CD4-positive, alpha-beta T cell (primary cell): ENCODE measurements at regions of chr18 and their contacts with region 1.

Region 1: DNA sequence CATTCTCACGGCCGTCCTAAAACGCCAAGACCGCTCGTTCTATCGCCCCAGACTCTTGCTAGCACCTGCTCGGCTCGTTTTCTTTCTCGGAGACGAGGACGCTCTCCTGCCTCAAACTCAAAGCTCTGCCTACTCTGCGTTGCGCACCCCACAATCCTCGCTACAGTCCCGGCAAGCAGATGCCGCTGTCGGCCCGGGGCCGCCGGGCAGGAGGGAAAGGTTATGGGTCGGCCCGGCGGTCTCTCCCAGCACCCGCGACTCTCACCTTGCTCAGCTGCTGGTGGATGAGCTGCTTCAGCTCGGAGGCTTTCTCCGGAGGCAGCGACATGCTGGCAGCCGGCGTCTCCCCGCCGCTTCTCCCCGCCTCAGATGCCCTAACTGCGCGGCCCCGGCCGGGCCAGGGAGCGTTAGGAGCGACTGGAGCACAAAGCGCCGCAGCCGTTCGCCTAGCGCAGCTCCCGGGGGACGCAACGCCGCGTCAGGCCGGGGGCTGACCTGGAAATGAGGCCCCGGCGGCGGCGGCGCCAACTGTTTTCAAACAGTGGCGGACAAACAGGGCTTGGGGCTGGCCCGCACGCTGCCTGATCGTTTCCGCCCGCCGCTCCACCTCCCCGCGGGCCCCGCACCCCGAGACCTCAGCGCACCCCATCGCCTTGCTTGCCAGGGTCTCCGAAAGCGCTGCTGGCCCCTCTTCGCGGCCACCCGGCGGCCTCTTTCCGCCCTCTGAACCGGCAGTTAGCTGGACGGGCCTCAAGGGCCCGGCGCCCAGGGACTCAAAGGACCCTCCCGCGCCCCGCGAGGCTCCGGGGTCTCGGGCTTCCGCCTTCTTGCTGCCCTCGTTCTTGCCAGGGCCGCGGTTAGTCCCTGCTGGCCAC is at the starts of genes CEP76 and PSMG2:
- DNase-seq: peak; percentile 69 to 91 (median 80)
- ATAC-seq: peak; percentile 73
- H3K4me3 ChIP-seq: peak within 1 kb of the TSS; percentile 96
- H3K4me3 Mint-ChIP-seq: peak within 1 kb of the TSS; percentile 94
- H3K27ac ChIP-seq: peak within 1 kb of the TSS; percentile 88 to 95
- H3K27ac Mint-ChIP-seq: peak within 1 kb of the TSS; percentile 85
- H3K4me1 ChIP-seq: peaks cover 25% of the 10 kb centered on the region
- H3K4me1 Mint-ChIP-seq: peaks cover 53% of the 10 kb centered on the region
- H3K27me3 ChIP-seq: no peaks in the 10 kb centered on the region
- H3K27me3 Mint-ChIP-seq: no peaks in the 10 kb centered on the region
- CTCF ChIP-seq: no peak
- total RNA-seq, gene CEP76: 8.0 to 8.7 TPM
- total RNA-seq, gene PSMG2: 58.4 to 61.7 TPM

Region 2: DNA sequence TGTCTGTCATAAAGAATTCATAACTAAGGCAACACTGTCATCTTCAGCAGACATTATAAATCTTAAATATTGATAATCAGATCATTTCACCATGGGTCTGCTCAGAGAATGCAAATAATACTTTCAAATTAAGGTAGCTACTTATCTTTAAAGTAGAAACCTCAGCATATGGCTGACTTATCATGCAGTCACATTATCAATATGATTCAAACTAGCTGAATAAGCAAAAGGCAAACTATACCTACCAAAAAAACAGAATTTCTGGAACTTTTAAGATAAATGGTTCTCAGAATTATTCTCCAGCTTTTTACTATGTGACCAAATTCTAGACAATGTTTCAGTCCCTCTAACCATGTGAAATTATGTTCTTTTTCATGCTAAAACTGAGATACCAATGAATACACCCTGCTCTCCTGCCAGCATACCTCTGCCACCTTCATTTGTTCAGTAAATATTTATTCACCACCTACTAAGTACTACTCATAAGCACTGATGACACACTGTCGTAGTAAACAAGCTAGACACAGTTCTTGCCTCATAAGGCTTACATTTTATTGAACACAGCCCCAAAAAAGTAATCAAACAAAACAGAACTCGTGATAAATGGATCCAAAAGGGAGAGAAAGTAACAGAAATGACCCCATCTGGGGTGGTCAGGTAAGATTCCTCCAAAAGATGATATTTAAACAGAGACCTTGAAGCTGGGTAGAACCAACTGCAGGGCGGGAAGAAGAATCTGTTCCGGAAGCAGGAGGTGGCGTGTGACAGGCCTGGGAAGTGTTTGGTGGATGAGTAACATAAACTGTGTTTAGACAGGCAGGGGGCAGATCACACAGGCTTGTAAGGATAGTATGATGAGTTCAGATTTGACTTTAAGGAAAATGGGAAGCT is 62.2 kb before region 1 on chr18:
- CTCF ChIA-PET with region 1: no interaction called
- POLR2A ChIA-PET with region 1: no interaction called
- intact Hi-C with region 1: no loop called
- DNase-seq: no peak
- ATAC-seq: no peak
- H3K4me3 ChIP-seq: no peak overlapping the region
- H3K4me3 Mint-ChIP-seq: no peak overlapping the region
- H3K27ac ChIP-seq: no peak overlapping the region
- H3K27ac Mint-ChIP-seq: no peak overlapping the region
- H3K4me1 ChIP-seq: no peaks in the 10 kb centered on the region
- H3K4me1 Mint-ChIP-seq: no peaks in the 10 kb centered on the region
- H3K27me3 ChIP-seq: no peaks in the 10 kb centered on the region
- H3K27me3 Mint-ChIP-seq: peaks cover 12% of the 10 kb centered on the region
- CTCF ChIP-seq: no peak

Region 3: DNA sequence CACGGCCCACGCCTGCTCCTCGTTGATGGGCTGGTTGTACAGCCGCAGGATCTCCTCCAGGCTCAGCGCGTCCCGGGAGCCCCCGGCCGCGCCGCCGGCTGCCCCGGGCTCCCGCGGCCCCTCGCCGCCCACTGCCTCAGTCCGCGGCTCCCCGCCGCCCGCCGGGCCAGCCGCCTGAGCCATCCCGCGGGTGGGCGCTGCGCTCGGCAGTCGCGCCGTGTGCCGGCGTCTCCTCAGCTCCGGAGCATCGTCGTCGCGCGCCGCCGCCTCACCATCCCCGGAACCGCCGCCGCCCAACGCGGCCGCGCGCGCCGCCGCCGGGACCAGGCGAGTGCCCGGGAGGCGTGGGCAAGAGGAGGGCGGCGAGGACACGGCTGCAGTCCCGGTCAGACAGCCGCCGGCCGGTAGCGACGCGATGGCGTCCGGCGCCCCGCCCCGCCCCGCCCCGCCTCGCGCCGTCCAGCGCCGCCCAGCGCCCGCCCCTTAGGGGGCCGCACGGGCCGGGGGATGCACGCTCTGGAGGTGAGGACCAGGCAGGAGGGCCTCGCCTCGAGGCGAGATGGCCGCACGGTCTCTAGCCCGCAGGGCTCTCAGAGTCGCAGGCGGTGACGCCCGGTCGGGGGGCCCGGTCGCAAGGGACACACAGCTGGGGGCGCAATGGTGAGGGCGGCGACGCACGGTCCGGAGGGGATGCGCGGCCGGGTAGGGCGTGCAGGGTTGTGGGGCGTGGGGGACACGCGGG is 44.6 kb before region 1 on chr18 and contains the start of gene SPIRE1:
- CTCF ChIA-PET with region 1: no interaction called
- POLR2A ChIA-PET with region 1: interaction called, 3 read pairs
- intact Hi-C with region 1: loop called in 1 of 2 experiments (anchors 2 kb)
- DNase-seq: peak in 11 of 14 experiments; percentile 6 to 75 (median 35)
- ATAC-seq: peak; percentile 61
- H3K4me3 ChIP-seq: peak within 1 kb of the TSS; percentile 45
- H3K4me3 Mint-ChIP-seq: peak within 1 kb of the TSS; percentile 93
- H3K27ac ChIP-seq: no peak within 1 kb of the TSS
- H3K27ac Mint-ChIP-seq: peak within 1 kb of the TSS; percentile 34
- H3K4me1 ChIP-seq: peaks cover 10% of the 10 kb centered on the region
- H3K4me1 Mint-ChIP-seq: peaks cover 12% of the 10 kb centered on the region
- H3K27me3 ChIP-seq: no peaks in the 10 kb centered on the region
- H3K27me3 Mint-ChIP-seq: peaks cover 18% of the 10 kb centered on the region
- CTCF ChIP-seq: no peak
- total RNA-seq, gene SPIRE1: 0.99 to 1.4 TPM

Region 4: DNA sequence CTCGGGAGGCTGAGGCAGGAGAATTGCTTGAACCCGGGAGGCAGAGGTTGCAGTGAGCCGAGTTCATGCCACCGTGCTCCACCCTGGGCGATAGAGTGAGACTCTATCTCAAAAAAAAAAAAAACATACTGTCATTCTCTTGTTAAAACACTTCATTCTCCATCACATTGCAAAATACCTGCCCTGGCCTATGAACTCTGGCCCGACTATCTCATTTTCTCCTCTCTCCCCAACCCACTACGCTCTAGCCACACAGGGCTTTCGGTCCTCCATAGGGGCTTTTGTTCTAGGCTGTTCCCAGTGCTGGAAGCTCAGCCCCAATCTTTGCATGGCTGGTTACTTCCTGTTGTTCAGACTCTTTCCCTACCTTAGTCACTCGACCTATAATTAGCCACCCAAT is 10.3 kb before region 1 on chr18:
- CTCF ChIA-PET with region 1: no interaction called
- POLR2A ChIA-PET with region 1: interaction called, 10 read pairs
- intact Hi-C with region 1: no loop called
- DNase-seq: no peak
- ATAC-seq: no peak
- H3K4me3 ChIP-seq: no peak overlapping the region
- H3K4me3 Mint-ChIP-seq: no peak overlapping the region
- H3K27ac ChIP-seq: no peak overlapping the region
- H3K27ac Mint-ChIP-seq: no peak overlapping the region
- H3K4me1 ChIP-seq: no peaks in the 10 kb centered on the region
- H3K4me1 Mint-ChIP-seq: no peaks in the 10 kb centered on the region
- H3K27me3 ChIP-seq: no peaks in the 10 kb centered on the region
- H3K27me3 Mint-ChIP-seq: no peaks in the 10 kb centered on the region
- CTCF ChIP-seq: no peak

Region 5: DNA sequence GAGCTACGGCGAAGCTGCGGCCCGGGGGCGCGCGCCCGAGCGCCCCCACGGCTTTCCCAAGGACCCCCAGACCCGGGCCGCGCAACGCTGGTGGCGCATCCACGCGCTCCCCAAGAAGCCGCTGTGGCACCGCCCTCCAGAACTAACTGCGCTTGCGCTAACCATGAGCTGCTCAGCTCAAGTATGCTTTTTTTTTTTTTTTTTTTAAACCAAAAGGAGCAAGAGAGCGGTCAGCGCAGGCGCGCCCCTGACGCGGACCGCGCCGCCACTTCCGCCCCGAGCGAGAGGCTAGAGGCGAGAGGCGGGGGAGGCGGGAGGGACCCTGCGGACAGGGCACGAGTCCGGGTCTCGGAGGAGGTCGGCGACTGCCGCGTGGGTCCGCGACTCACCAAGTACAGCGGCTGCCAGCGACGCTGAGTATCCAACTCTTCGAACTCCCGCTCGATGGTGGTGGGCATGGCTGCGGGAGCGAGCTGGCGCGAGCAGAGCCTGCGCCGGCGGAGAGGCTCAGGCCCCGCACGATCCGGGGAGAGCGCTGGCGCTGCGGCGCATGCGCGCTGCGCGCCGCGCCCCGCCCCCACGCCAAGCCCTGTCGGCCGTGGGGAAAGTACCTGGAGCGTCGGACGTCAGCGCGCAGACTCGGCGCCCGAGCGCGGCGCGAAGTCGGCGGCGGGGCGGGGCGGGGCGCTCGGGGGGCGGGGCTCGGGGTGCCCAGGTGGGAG is 181.4 kb after region 1 on chr18 and contains the start of gene PTPN2:
- CTCF ChIA-PET with region 1: no interaction called
- POLR2A ChIA-PET with region 1: interaction called, 26 read pairs
- intact Hi-C with region 1: loop called in 1 of 2 experiments (anchors 2 kb)
- DNase-seq: peak; percentile 83 to 98 (median 90)
- ATAC-seq: peak; percentile 87
- H3K4me3 ChIP-seq: peak within 1 kb of the TSS; percentile 77
- H3K4me3 Mint-ChIP-seq: peak within 1 kb of the TSS; percentile 97
- H3K27ac ChIP-seq: peak within 1 kb of the TSS; percentile 99
- H3K27ac Mint-ChIP-seq: peak within 1 kb of the TSS; percentile 99
- H3K4me1 ChIP-seq: peaks cover 44% of the 10 kb centered on the region
- H3K4me1 Mint-ChIP-seq: peaks cover 64% of the 10 kb centered on the region
- H3K27me3 ChIP-seq: no peaks in the 10 kb centered on the region
- H3K27me3 Mint-ChIP-seq: no peaks in the 10 kb centered on the region
- CTCF ChIP-seq: no peak
- total RNA-seq, gene PTPN2: 49.4 to 53.8 TPM

Region 6: GRCh38 chr18:12947355-12948041 is 245.0 kb after region 1 on chr18 and contains the start of gene SEH1L:
- CTCF ChIA-PET with region 1: no interaction called
- POLR2A ChIA-PET with region 1: interaction called, 17 read pairs
- intact Hi-C with region 1: no loop called
- DNase-seq: peak; percentile 96 to 100 (median 99)
- ATAC-seq: peak; percentile 80
- H3K4me3 ChIP-seq: peak within 1 kb of the TSS; percentile 69
- H3K4me3 Mint-ChIP-seq: peak within 1 kb of the TSS; percentile 92
- H3K27ac ChIP-seq: peak within 1 kb of the TSS; percentile 93 to 96
- H3K27ac Mint-ChIP-seq: peak within 1 kb of the TSS; percentile 96
- H3K4me1 ChIP-seq: peaks cover 38% of the 10 kb centered on the region
- H3K4me1 Mint-ChIP-seq: peaks cover 38% of the 10 kb centered on the region
- H3K27me3 ChIP-seq: no peaks in the 10 kb centered on the region
- H3K27me3 Mint-ChIP-seq: no peaks in the 10 kb centered on the region
- CTCF ChIP-seq: no peak
- total RNA-seq, gene SEH1L: 23.9 to 26.7 TPM

Region 7: GRCh38 chr18:12990967-12991838 is 288.7 kb after region 1 on chr18 and contains the start of gene CEP192:
- CTCF ChIA-PET with region 1: no interaction called
- POLR2A ChIA-PET with region 1: interaction called, 8 read pairs
- intact Hi-C with region 1: loop called in 1 of 2 experiments (anchors 5 kb)
- DNase-seq: peak; percentile 94 to 99 (median 95)
- ATAC-seq: peak; percentile 97
- H3K4me3 ChIP-seq: peak within 1 kb of the TSS; percentile 85
- H3K4me3 Mint-ChIP-seq: no peak within 1 kb of the TSS
- H3K27ac ChIP-seq: peak within 1 kb of the TSS; percentile 61 to 84
- H3K27ac Mint-ChIP-seq: peak within 1 kb of the TSS; percentile 83
- H3K4me1 ChIP-seq: peaks cover 32% of the 10 kb centered on the region
- H3K4me1 Mint-ChIP-seq: peaks cover 21% of the 10 kb centered on the region
- H3K27me3 ChIP-seq: no peaks in the 10 kb centered on the region
- H3K27me3 Mint-ChIP-seq: no peaks in the 10 kb centered on the region
- CTCF ChIP-seq: no peak
- total RNA-seq, gene CEP192: 23.4 to 25.0 TPM

Region 8: GRCh38 chr18:13720123-13720522 is 1017.7 kb after region 1 on chr18:
- CTCF ChIA-PET with region 1: no interaction called
- POLR2A ChIA-PET with region 1: no interaction called
- intact Hi-C with region 1: loop called in 1 of 2 experiments (anchors 5 kb)
- DNase-seq: no peak
- ATAC-seq: no peak
- H3K4me3 ChIP-seq: no peak overlapping the region
- H3K4me3 Mint-ChIP-seq: no peak overlapping the region
- H3K27ac ChIP-seq: no peak overlapping the region
- H3K27ac Mint-ChIP-seq: no peak overlapping the region
- H3K4me1 ChIP-seq: peaks cover 5% of the 10 kb centered on the region
- H3K4me1 Mint-ChIP-seq: peaks cover 44% of the 10 kb centered on the region
- H3K27me3 ChIP-seq: no peaks in the 10 kb centered on the region
- H3K27me3 Mint-ChIP-seq: no peaks in the 10 kb centered on the region
- CTCF ChIP-seq: no peak